ENCODE measurements at regions of chr17 and their contacts with region 1.

Region 1: GRCh38 chr17:44417553-44417952 is 28.1 kb upstream of the ITGA2B start:
- DNase-seq: peak; percentile 34 to 86
- H3K4me3 ChIP-seq: no peak overlapping the region
- H3K27ac ChIP-seq: peak overlapping the region; percentile 71
- H3K4me1 ChIP-seq: peaks cover 16% of the 10 kb centered on the region
- H3K27me3 ChIP-seq: no peaks in the 10 kb centered on the region
- CTCF ChIP-seq: no peak

Region 2: GRCh38 chr17:44672479-44673093 is 255.0 kb after region 1 on chr17:
- CTCF ChIA-PET with region 1: interaction called, 3 read pairs
- POLR2A ChIA-PET with region 1: no interaction called
- intact Hi-C with region 1: loop called (anchors 10 kb)
- DNase-seq: no peak
- H3K4me3 ChIP-seq: no peak overlapping the region
- H3K27ac ChIP-seq: no peak overlapping the region
- H3K4me1 ChIP-seq: no peaks in the 10 kb centered on the region
- H3K27me3 ChIP-seq: no peaks in the 10 kb centered on the region
- CTCF ChIP-seq: peak; percentile 73